CD14-positive monocyte (primary cell): ENCODE measurements at regions of chr11 and their contacts with region 1.

Region 1: DNA sequence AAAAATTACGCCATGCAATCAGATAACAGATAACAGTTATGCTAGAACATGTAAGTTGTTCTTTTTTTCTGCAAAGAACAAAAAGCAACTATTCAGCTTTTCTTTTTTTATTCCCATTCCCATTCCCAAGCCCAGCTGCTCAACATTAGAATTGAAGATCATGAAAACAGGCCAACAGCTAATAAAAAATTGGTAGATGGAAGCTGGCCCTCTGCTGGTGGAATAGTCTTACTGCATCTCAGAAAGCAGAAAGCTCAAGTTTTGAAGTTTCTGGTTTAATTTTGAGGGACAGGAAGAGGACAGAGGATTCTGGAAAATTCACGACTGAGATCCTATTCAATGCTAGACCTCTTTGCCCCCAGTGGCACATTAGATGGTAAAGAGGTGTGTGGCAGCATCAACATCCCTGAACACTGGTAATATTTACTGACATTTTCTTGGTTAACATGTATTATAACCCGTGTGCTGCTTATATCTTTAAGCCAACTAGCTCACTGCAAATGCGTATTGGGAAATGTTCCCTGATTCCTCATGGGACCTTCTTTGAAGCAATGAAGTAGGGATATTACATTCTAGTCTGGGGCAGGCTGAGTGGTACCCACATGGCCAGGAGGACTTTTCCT is 591.2 kb downstream of the OPCML start:
- DNase-seq: no peak
- H3K4me3 ChIP-seq: no peak overlapping the region
- H3K4me3 Mint-ChIP-seq: no peak overlapping the region
- H3K27ac ChIP-seq: no peak overlapping the region
- H3K27ac Mint-ChIP-seq: no peak overlapping the region
- H3K4me1 ChIP-seq: no peaks in the 10 kb centered on the region
- H3K4me1 Mint-ChIP-seq: no peaks in the 10 kb centered on the region
- H3K27me3 ChIP-seq: peaks cover 18 to 34% of the 10 kb centered on the region in 2 donors
- H3K27me3 Mint-ChIP-seq: peaks cover 30 to 38% (median 35%) of the 10 kb centered on the region in 3 donors
- CTCF ChIP-seq: peak; percentile 91

Region 2: GRCh38 chr11:131748151-131749050 is 1192.7 kb before region 1 on chr11:
- intact Hi-C with region 1: loop called in 1 of 2 experiments (anchors 5 kb)
- DNase-seq: peak; percentile 4 to 42 (median 40)
- H3K4me3 ChIP-seq: no peak overlapping the region
- H3K4me3 Mint-ChIP-seq: no peak overlapping the region
- H3K27ac ChIP-seq: no peak overlapping the region
- H3K27ac Mint-ChIP-seq: no peak overlapping the region
- H3K4me1 ChIP-seq: no peaks in the 10 kb centered on the region
- H3K4me1 Mint-ChIP-seq: no peaks in the 10 kb centered on the region
- H3K27me3 ChIP-seq: peaks cover 0 to 2% of the 10 kb centered on the region in 2 donors
- H3K27me3 Mint-ChIP-seq: peaks cover 3 to 13% (median 5%) of the 10 kb centered on the region in 3 donors
- CTCF ChIP-seq: peak; percentile 80

Region 3: GRCh38 chr11:131867457-131868257 is 1073.5 kb before region 1 on chr11:
- intact Hi-C with region 1: loop called in 1 of 2 experiments (anchors 10 kb)
- DNase-seq: peak; percentile 9 to 38 (median 23)
- H3K4me3 ChIP-seq: no peak overlapping the region
- H3K4me3 Mint-ChIP-seq: no peak overlapping the region
- H3K27ac ChIP-seq: no peak overlapping the region
- H3K27ac Mint-ChIP-seq: no peak overlapping the region
- H3K4me1 ChIP-seq: no peaks in the 10 kb centered on the region
- H3K4me1 Mint-ChIP-seq: peaks cover 3% of the 10 kb centered on the region
- H3K27me3 ChIP-seq: no peaks in the 10 kb centered on the region
- H3K27me3 Mint-ChIP-seq: peaks cover 2 to 4% (median 3%) of the 10 kb centered on the region in 3 donors
- CTCF ChIP-seq: peak; percentile 34

Region 4: DNA sequence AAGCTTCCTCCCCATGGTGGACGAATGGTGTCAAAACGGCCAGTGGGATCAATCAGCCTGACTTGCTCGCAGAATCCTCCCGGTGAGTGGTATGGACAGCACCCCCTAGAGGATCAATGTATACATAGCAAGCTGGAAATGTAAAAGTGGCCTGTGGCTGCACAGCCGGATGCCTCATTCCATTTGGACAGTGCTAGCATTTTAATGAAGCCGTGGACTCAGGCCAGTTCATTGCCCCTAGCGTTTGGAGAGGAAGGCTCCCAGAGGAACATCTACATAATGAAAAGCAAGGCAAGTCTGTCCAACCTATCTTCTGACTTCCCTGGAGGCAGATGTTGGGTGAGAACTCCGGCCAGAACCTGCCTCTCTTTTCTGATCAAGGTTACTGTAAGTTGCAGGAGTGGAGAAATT is 628.4 kb before region 1 on chr11:
- intact Hi-C with region 1: no loop called
- DNase-seq: no peak
- H3K4me3 ChIP-seq: no peak overlapping the region
- H3K4me3 Mint-ChIP-seq: no peak overlapping the region
- H3K27ac ChIP-seq: no peak overlapping the region
- H3K27ac Mint-ChIP-seq: no peak overlapping the region
- H3K4me1 ChIP-seq: no peaks in the 10 kb centered on the region
- H3K4me1 Mint-ChIP-seq: no peaks in the 10 kb centered on the region
- H3K27me3 ChIP-seq: no peaks in the 10 kb centered on the region
- H3K27me3 Mint-ChIP-seq: peaks cover 1 to 2% (median 1%) of the 10 kb centered on the region in 3 donors
- CTCF ChIP-seq: peak; percentile 36